Panc1 (cell line): ENCODE measurements at regions of chr1 and their contacts with region 1.

Region 1: DNA sequence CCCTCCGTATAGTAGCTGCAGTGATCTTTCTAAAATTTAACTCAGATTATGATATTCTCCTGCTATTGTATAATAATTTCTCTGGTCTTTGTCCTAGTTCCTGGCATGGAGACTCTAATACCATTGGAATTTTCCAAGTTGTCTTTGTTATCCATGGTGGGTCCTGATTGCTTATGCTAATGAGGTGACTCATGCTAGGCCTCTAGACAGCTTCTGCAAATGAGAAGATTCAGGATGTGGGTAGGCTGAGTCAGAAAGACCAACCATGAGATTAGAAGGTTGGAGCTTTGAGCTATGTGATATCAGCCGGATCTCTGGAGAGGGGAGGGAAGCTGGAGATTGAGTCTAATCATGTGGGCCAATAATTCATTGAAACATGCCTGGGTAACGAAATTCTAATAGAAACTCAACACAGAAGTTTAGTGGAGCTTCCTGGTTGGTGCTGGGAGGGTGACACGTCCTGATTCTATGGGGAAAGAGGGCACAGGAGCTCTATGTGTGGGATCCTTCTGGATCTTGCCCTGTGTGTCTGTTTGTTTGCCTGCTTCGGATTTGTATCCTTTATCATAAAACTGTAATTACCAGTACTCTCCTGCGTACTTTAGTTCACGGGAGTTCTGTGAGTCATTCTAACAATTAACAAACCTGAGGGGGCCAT is 73.2 kb upstream of the CNIH3 start:
- DNase-seq: no peak
- ATAC-seq: peak; percentile 89
- H3K4me3 ChIP-seq: no peak overlapping the region
- H3K27ac ChIP-seq: no peak overlapping the region
- H3K4me1 ChIP-seq: no peaks in the 10 kb centered on the region
- H3K27me3 ChIP-seq: no peaks in the 10 kb centered on the region
- CTCF ChIP-seq: no peak

Region 2: GRCh38 chr1:224064150-224064549 is 478.8 kb before region 1 on chr1:
- CTCF ChIA-PET with region 1: interaction called, 12 read pairs
- POLR2A ChIA-PET with region 1: no interaction called
- in situ Hi-C with region 1: no loop called
- intact Hi-C with region 1: no loop called
- DNase-seq: no peak
- ATAC-seq: no peak
- H3K4me3 ChIP-seq: no peak overlapping the region
- H3K27ac ChIP-seq: no peak overlapping the region
- H3K4me1 ChIP-seq: no peaks in the 10 kb centered on the region; the same call in 1 of the 2 replicates
- H3K27me3 ChIP-seq: no peaks in the 10 kb centered on the region
- CTCF ChIP-seq: no peak

Region 3: DNA sequence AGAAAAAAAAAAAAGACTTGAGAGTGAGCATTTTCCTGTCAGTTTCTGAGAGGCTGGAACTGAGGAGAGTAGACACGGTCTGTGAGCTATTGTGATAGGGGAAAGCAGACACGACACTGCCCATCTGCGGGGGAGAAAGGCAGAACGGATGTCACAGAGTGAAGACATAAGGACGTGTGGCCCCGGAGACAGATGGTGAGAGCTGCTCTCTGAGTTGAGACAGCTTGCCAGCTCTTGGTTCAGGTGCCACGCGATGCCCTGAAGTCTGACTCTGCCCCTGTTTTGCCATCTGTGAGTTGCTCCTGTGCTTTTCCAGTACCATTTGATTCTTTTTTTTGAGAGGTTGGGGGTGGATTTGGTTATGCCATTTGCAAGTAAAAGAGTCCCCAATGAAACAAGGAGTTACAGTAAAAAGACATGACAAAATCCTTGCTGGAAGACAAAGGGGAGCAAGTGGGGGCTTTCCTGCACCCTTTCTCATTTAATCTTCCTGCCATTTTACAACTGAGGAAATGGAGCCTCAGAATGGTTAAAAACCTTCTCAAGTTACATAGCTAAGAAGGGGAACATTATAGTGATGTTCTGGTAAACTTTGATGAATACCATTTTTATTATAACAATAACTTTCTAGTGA is 257.7 kb after region 1 on chr1:
- CTCF ChIA-PET with region 1: no interaction called
- POLR2A ChIA-PET with region 1: interaction called, 12 read pairs
- in situ Hi-C with region 1: no loop called
- intact Hi-C with region 1: no loop called
- DNase-seq: no peak
- ATAC-seq: no peak
- H3K4me3 ChIP-seq: no peak overlapping the region
- H3K27ac ChIP-seq: no peak overlapping the region
- H3K4me1 ChIP-seq: no peaks in the 10 kb centered on the region
- H3K27me3 ChIP-seq: no peaks in the 10 kb centered on the region; the same call in none of the 2 replicates
- CTCF ChIP-seq: no peak